ENCODE measurements at regions of chr12 and their contacts with region 1.

Region 1: GRCh38 chr12:114444422-114445279 is 38.7 kb upstream of the TBX5 start:
- DNase-seq: no peak
- H3K4me3 Mint-ChIP-seq: no peak overlapping the region
- H3K27ac Mint-ChIP-seq: no peak overlapping the region
- H3K4me1 Mint-ChIP-seq: no peaks in the 10 kb centered on the region
- H3K27me3 Mint-ChIP-seq: peaks cover 78% of the 10 kb centered on the region

Region 2: GRCh38 chr12:113467502-113468364 is 976.9 kb before region 1 on chr12:
- intact Hi-C with region 1: loop called (anchors 5 kb)
- DNase-seq: no peak
- H3K4me3 Mint-ChIP-seq: no peak overlapping the region
- H3K27ac Mint-ChIP-seq: no peak overlapping the region
- H3K4me1 Mint-ChIP-seq: peaks cover 6% of the 10 kb centered on the region
- H3K27me3 Mint-ChIP-seq: peaks cover 58% of the 10 kb centered on the region

Region 3: DNA sequence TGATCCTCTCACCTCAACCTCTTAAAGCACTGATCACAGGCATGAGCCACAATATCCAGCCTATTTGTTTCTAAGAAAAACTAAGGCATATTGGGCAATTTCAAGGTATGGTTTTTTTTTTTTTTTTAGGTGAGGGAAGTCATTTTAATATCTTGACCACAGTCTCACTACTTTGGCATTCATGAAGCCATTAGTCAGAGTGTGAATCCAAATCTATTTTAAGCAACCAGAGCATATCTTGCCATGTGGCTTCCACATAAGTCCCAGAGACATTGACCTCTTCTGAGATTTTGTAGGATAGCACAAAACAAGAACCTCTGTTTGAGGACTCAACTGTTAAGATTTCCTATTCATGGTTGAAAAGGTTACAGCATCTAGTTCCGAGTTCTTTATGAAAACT is 348.2 kb before region 1 on chr12:
- intact Hi-C with region 1: no loop called
- DNase-seq: no peak
- H3K4me3 Mint-ChIP-seq: no peak overlapping the region
- H3K27ac Mint-ChIP-seq: no peak overlapping the region
- H3K4me1 Mint-ChIP-seq: no peaks in the 10 kb centered on the region
- H3K27me3 Mint-ChIP-seq: no peaks in the 10 kb centered on the region

Region 4: GRCh38 chr12:114141921-114142564 is 302.6 kb before region 1 on chr12:
- intact Hi-C with region 1: no loop called
- DNase-seq: no peak
- H3K4me3 Mint-ChIP-seq: no peak overlapping the region
- H3K27ac Mint-ChIP-seq: no peak overlapping the region
- H3K4me1 Mint-ChIP-seq: no peaks in the 10 kb centered on the region
- H3K27me3 Mint-ChIP-seq: no peaks in the 10 kb centered on the region

Region 5: GRCh38 chr12:114403011-114403689 is 41.5 kb before region 1 on chr12:
- intact Hi-C with region 1: loop called (anchors 2 kb)
- DNase-seq: no peak
- H3K4me3 Mint-ChIP-seq: no peak overlapping the region
- H3K27ac Mint-ChIP-seq: peak overlapping the region; percentile 63
- H3K4me1 Mint-ChIP-seq: peaks cover 3% of the 10 kb centered on the region
- H3K27me3 Mint-ChIP-seq: peaks cover 83% of the 10 kb centered on the region

Region 6: GRCh38 chr12:114684098-114684869 is 239.6 kb after region 1 on chr12 and contains the start of gene TBX3:
- intact Hi-C with region 1: loop called (anchors 5 kb)
- DNase-seq: peak; percentile 1
- H3K4me3 Mint-ChIP-seq: peak within 1 kb of the TSS; percentile 33
- H3K27ac Mint-ChIP-seq: peak within 1 kb of the TSS; percentile 81
- H3K4me1 Mint-ChIP-seq: peaks cover 13% of the 10 kb centered on the region
- H3K27me3 Mint-ChIP-seq: peaks cover 84% of the 10 kb centered on the region
- total RNA-seq, gene TBX3: not detected in 2 replicates

Region 7: DNA sequence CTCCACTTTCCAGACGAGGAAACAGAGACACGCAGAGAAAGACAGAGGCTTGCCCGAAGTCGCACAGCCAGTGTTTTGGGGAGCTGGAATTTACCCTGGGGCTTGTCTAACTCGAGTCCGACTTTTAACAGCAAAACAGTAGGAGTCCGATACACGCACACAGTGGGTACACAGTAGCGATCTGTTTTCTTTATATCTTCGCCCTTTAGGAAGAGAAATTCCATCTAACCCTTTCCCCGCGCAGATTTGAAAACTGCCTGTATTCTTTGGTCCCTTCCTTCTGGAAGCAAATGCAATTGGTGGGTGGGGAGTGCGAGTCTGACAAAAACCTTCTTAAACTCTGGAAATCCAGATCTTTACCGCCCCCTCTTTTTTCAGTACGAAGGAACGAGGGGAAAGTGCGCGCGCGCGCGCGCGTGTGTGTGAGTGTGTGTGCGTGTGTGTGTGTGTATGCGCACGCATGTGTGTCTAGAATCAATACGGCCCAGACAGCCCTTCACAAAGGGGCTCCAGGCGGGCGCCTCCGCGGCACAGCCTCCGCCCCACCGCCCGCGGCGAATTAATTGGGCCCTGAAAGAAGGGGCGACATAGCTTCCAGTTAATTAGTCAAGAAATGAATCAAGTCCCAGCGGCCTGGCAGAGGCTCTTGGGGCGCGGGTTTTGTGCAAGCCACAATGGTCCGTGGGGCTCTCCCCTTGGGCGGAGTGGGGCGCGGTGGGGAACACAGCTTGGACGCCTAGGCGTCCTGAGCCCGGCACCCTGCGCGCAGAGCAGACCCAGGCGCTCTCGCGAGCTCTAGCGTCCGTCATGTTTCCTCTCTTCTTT is 253.3 kb after region 1 on chr12:
- intact Hi-C with region 1: loop called (anchors 5 kb)
- DNase-seq: no peak
- H3K4me3 Mint-ChIP-seq: no peak overlapping the region
- H3K27ac Mint-ChIP-seq: no peak overlapping the region
- H3K4me1 Mint-ChIP-seq: no peaks in the 10 kb centered on the region
- H3K27me3 Mint-ChIP-seq: peaks cover 82% of the 10 kb centered on the region

Measured in activated T-helper 1 cell treated with anti-CD3 and anti-CD28 coated beads, Interleukin-12 subunit alpha, Interleukin-12 subunit beta, Interleukin-2, Interleukin-4 antibody, amounts not matched to agents 30 ng/mL and 10 ng/mL and 1 ng/mL, durations not matched to agents 14 hours and 24 hours and 36 hours (primary cell).